ENCODE measurements at regions of chr5 and their contacts with region 1.

Region 1: GRCh38 chr5:64364426-64364825 is 141.4 kb upstream of the RGS7BP start:
- DNase-seq: no peak
- ATAC-seq: no peak

Region 2: GRCh38 chr5:63500242-63500641 is 864.2 kb before region 1 on chr5:
- intact Hi-C with region 1: no loop called
- DNase-seq: no peak
- ATAC-seq: no peak

Region 3: GRCh38 chr5:63803165-63803564 is 561.3 kb before region 1 on chr5:
- intact Hi-C with region 1: loop called (anchors 10 kb)
- DNase-seq: no peak
- ATAC-seq: no peak

Measured in left ventricle myocardium superior (tissue), 1 donor.